Breast epithelium (tissue), 4 donors: ENCODE measurements at regions of chr3 and their contacts with region 1.

Region 1: DNA sequence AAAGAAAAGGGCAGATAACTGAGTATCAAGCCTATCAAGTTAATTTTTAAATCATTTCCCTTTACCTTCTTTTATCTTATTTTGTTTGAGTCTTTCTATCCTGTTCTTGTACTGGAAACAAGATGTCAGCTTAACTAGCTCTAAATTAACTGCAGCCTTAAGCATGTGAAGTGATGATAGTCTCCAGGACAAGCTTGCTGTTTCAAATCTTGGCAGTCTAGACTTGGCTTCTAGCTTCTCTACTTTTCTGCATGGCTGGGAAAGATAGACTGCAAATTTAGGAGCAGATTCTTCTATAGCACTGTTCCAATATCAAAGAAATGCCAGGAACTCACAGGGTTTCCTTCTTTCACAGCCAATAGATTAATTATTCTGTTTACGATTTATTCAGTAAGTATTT is 1034.4 kb downstream of the TUSC7 start:
- DNase-seq: no peak
- H3K4me3 ChIP-seq: no peak overlapping the region
- H3K27ac ChIP-seq: no peak overlapping the region
- H3K4me1 ChIP-seq: no peaks in the 10 kb centered on the region
- H3K27me3 ChIP-seq: no peaks in the 10 kb centered on the region
- CTCF ChIP-seq: no peak
- POLR2A ChIP-seq: no peak

Region 2: DNA sequence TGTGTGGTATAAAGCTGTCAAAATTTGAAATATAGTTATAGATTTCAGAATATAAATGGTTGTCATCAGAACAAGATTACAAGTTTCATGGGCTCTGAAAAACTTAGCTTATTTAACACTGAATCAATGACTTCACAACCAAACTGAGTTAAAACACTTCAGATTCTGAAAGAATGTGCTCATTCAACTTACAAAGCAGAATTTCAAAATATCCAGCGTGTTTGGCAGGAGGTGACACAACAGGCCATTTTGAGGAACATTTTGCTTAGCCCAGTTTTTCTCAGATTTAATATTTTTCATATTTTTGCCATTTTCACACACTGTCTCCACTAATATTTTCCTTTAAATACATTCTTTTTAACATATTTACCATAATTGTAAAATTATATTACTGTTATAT is 253.3 kb before region 1 on chr3:
- intact Hi-C with region 1: loop called (anchors 5 kb)
- DNase-seq: no peak
- H3K4me3 ChIP-seq: no peak overlapping the region
- H3K27ac ChIP-seq: no peak overlapping the region
- H3K4me1 ChIP-seq: no peaks in the 10 kb centered on the region
- H3K27me3 ChIP-seq: no peaks in the 10 kb centered on the region
- CTCF ChIP-seq: no peak
- POLR2A ChIP-seq: no peak

Region 3: GRCh38 chr3:117719316-117719926 is 24.6 kb before region 1 on chr3:
- intact Hi-C with region 1: no loop called
- DNase-seq: no peak
- H3K4me3 ChIP-seq: no peak overlapping the region
- H3K27ac ChIP-seq: no peak overlapping the region
- H3K4me1 ChIP-seq: no peaks in the 10 kb centered on the region
- H3K27me3 ChIP-seq: no peaks in the 10 kb centered on the region
- CTCF ChIP-seq: peak in 2 of 3 donors; percentile 46 to 59
- POLR2A ChIP-seq: no peak